ENCODE measurements at regions of chr2 and their contacts with region 1.

Region 1: GRCh38 chr2:28392297-28393113 is at the start of gene FOSL2:
- DNase-seq: peak; percentile 100
- H3K4me3 ChIP-seq: peak within 1 kb of the TSS; percentile 77 to 97 (median 90)
- H3K27ac ChIP-seq: peak within 1 kb of the TSS; percentile 95
- H3K4me1 ChIP-seq: peaks cover 31% of the 10 kb centered on the region
- H3K27me3 ChIP-seq: no peaks in the 10 kb centered on the region
- CTCF ChIP-seq: no peak
- POLR2A ChIP-seq: peak; percentile 90
- total RNA-seq, gene FOSL2: 83.7 and 85.3 TPM in 2 replicates

Region 2: DNA sequence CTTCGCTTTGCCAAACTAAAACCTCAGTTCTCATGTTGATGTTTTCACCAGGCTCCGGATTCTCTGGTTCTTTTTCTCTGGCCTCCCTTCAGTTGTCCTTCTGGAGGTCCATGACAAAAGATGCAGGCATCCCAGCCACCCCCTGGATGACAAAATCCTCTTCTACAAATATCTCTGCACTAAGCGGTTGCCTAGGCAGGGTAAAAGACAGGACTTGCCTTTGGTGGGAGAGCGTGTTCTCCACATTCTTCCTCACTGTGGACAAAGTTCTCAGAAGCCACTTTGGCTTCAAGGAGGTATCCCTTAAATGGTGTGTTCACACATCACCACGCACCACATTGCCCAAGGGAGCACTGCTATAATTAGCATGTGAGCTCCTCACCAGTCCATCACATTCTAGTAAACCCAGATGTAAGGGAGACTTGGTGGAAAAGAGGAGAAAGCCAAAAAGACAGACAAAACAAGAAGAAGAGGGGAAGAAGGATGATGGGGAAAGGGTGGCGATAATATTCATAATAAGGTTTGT is 644.6 kb before region 1 on chr2:
- CTCF ChIA-PET with region 1: no interaction called
- POLR2A ChIA-PET with region 1: interaction called, 11 read pairs
- dilution Hi-C with region 1: no loop called
- intact Hi-C with region 1: no loop called
- DNase-seq: no peak
- H3K4me3 ChIP-seq: no peak overlapping the region
- H3K27ac ChIP-seq: no peak overlapping the region
- H3K4me1 ChIP-seq: no peaks in the 10 kb centered on the region
- H3K27me3 ChIP-seq: no peaks in the 10 kb centered on the region
- CTCF ChIP-seq: no peak
- POLR2A ChIP-seq: no peak

Region 3: GRCh38 chr2:27890146-27890923 is 502.2 kb before region 1 on chr2 and contains the starts of genes BABAM2 and RBKS:
- CTCF ChIA-PET with region 1: interaction called, 3 read pairs
- POLR2A ChIA-PET with region 1: no interaction called
- dilution Hi-C with region 1: no loop called
- intact Hi-C with region 1: loop called (anchors 1 kb)
- DNase-seq: peak; percentile 86
- H3K4me3 ChIP-seq: peak within 1 kb of the TSS; percentile 26 to 71 (median 55)
- H3K27ac ChIP-seq: peak within 1 kb of the TSS; percentile 88
- H3K4me1 ChIP-seq: peaks cover 18% of the 10 kb centered on the region
- H3K27me3 ChIP-seq: no peaks in the 10 kb centered on the region
- CTCF ChIP-seq: no peak
- POLR2A ChIP-seq: peak; percentile 62
- total RNA-seq, gene BABAM2: 26.9 and 27.6 TPM in 2 replicates
- total RNA-seq, gene RBKS: 0.64 and 0.74 TPM in 2 replicates

Region 4: GRCh38 chr2:28080911-28081310 is 311.6 kb before region 1 on chr2:
- CTCF ChIA-PET with region 1: interaction called, 4 read pairs
- POLR2A ChIA-PET with region 1: interaction called, 6 read pairs
- dilution Hi-C with region 1: no loop called
- intact Hi-C with region 1: loop called (anchors 1 kb)
- DNase-seq: peak; percentile 93
- H3K4me3 ChIP-seq: peak overlapping the region in 1 of 3 experiments; percentile 1
- H3K27ac ChIP-seq: peak overlapping the region; percentile 88
- H3K4me1 ChIP-seq: peaks cover 31% of the 10 kb centered on the region
- H3K27me3 ChIP-seq: no peaks in the 10 kb centered on the region
- CTCF ChIP-seq: no peak
- POLR2A ChIP-seq: peak; percentile 73

Region 5: GRCh38 chr2:28219138-28219537 is 173.4 kb before region 1 on chr2:
- CTCF ChIA-PET with region 1: no interaction called
- POLR2A ChIA-PET with region 1: no interaction called
- dilution Hi-C with region 1: no loop called
- intact Hi-C with region 1: no loop called
- DNase-seq: no peak
- H3K4me3 ChIP-seq: no peak overlapping the region
- H3K27ac ChIP-seq: no peak overlapping the region
- H3K4me1 ChIP-seq: no peaks in the 10 kb centered on the region
- H3K27me3 ChIP-seq: no peaks in the 10 kb centered on the region
- CTCF ChIP-seq: no peak
- POLR2A ChIP-seq: no peak

Region 6: GRCh38 chr2:28338046-28338817 is 54.3 kb before region 1 on chr2:
- CTCF ChIA-PET with region 1: no interaction called
- POLR2A ChIA-PET with region 1: interaction called, 4 read pairs
- dilution Hi-C with region 1: no loop called
- intact Hi-C with region 1: loop called (anchors 1 kb)
- DNase-seq: peak; percentile 81
- H3K4me3 ChIP-seq: no peak overlapping the region
- H3K27ac ChIP-seq: no peak overlapping the region
- H3K4me1 ChIP-seq: peaks cover 22% of the 10 kb centered on the region
- H3K27me3 ChIP-seq: no peaks in the 10 kb centered on the region
- CTCF ChIP-seq: no peak
- POLR2A ChIP-seq: no peak

Region 7: GRCh38 chr2:28544919-28545589 is 152.5 kb after region 1 on chr2:
- CTCF ChIA-PET with region 1: no interaction called
- POLR2A ChIA-PET with region 1: no interaction called
- dilution Hi-C with region 1: no loop called
- intact Hi-C with region 1: no loop called
- DNase-seq: no peak
- H3K4me3 ChIP-seq: no peak overlapping the region
- H3K27ac ChIP-seq: no peak overlapping the region
- H3K4me1 ChIP-seq: peaks cover 13% of the 10 kb centered on the region
- H3K27me3 ChIP-seq: peaks cover 0 to 2% of the 10 kb centered on the region in 2 experiments
- CTCF ChIP-seq: no peak
- POLR2A ChIP-seq: no peak